Ovary (tissue), 10 donors: ENCODE measurements at regions of chr10 and their contacts with region 1.

Region 1: DNA sequence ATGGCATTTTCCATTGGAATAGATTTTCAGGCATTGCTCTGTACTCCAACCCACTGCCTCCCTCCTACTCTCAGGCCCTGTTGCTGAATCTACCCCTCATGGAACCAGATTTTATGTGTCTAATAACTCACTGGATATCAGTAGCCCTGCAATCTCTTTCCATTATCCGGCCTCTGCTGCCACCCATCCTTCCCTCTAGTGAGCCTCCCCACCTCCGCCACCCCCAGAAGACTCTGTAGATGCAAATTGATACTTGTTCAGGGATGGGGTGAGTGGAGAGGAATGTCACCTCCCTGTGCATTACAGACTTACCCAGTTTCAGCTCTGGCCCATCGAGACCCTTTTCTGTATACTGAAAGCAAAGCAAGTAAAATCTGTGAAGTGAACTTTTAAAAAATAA is 52.3 kb upstream of the PHYHIPL start:
- DNase-seq: no peak
- H3K4me3 ChIP-seq: no peak overlapping the region
- H3K27ac ChIP-seq: no peak overlapping the region
- H3K4me1 ChIP-seq: peaks cover 2% of the 10 kb centered on the region
- H3K27me3 ChIP-seq: no peaks in the 10 kb centered on the region
- CTCF ChIP-seq: no peak
- EP300 ChIP-seq: no peak
- POLR2A ChIP-seq: no peak

Region 2: DNA sequence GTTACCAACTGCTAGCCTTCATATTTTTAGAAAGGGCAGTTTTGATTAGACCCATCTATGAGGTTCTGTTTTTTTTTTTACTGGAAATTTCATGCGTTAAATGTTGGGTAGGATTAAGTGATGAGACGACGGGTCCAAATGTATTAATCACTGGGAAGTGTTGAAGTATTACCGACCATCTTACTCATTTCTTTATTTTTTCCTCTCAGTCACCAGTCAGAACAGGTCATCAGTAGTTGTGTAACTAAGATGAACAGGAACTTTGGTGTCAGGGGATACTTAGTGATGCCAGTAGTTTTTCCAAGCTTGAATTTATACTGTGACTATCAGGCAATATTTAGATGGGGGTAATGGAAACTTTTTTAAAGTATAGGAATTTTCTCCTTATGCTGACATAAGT is 724.8 kb before region 1 on chr10:
- intact Hi-C with region 1: loop called in 1 of 4 experiments (anchors 5 kb)
- DNase-seq: no peak
- H3K4me3 ChIP-seq: no peak overlapping the region
- H3K27ac ChIP-seq: no peak overlapping the region
- H3K4me1 ChIP-seq: no peaks in the 10 kb centered on the region
- H3K27me3 ChIP-seq: no peaks in the 10 kb centered on the region
- CTCF ChIP-seq: no peak
- EP300 ChIP-seq: no peak
- POLR2A ChIP-seq: no peak

Region 3: DNA sequence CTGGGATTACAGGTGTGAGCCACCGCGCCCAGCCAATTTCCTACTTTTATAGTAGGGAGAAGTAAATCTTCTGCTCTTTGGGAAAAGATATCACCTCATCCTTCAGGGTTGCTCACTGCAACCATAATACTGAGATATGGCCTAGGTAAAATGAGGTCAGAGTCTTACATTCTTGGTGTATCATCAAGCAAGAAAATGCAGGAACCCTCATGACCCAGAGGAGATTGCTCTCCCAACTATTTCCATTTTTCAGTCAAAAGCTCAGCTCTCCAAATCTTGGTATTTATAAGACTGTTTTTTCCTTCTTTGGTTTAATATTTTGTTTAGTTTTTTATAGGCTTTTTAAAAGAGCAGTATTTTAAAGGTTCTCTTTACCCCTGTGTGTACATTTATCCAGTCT is 31.4 kb after region 1 on chr10:
- intact Hi-C with region 1: no loop called
- DNase-seq: no peak
- H3K4me3 ChIP-seq: no peak overlapping the region
- H3K27ac ChIP-seq: no peak overlapping the region
- H3K4me1 ChIP-seq: no peaks in the 10 kb centered on the region
- H3K27me3 ChIP-seq: no peaks in the 10 kb centered on the region
- CTCF ChIP-seq: no peak
- EP300 ChIP-seq: no peak
- POLR2A ChIP-seq: no peak